ENCODE measurements at regions of chr14 and their contacts with region 1.

Region 1: GRCh38 chr14:67166450-67166853 is 22.8 kb upstream of the GARIN2 start:
- DNase-seq: no peak
- H3K4me3 Mint-ChIP-seq: no peak overlapping the region
- H3K27ac Mint-ChIP-seq: no peak overlapping the region
- H3K4me1 Mint-ChIP-seq: peaks cover 7% of the 10 kb centered on the region
- H3K27me3 Mint-ChIP-seq: no peaks in the 10 kb centered on the region

Region 2: GRCh38 chr14:66910311-66910840 is 256.1 kb before region 1 on chr14:
- intact Hi-C with region 1: no loop called
- DNase-seq: no peak
- H3K4me3 Mint-ChIP-seq: no peak overlapping the region
- H3K27ac Mint-ChIP-seq: no peak overlapping the region
- H3K4me1 Mint-ChIP-seq: no peaks in the 10 kb centered on the region
- H3K27me3 Mint-ChIP-seq: no peaks in the 10 kb centered on the region

Region 3: GRCh38 chr14:67187210-67187609 is 20.8 kb after region 1 on chr14:
- intact Hi-C with region 1: loop called (anchors 2 kb)
- DNase-seq: no peak
- H3K4me3 Mint-ChIP-seq: no peak overlapping the region
- H3K27ac Mint-ChIP-seq: no peak overlapping the region
- H3K4me1 Mint-ChIP-seq: peaks cover 25% of the 10 kb centered on the region
- H3K27me3 Mint-ChIP-seq: no peaks in the 10 kb centered on the region

Region 4: GRCh38 chr14:67240978-67241414 is 74.5 kb after region 1 on chr14:
- intact Hi-C with region 1: loop called (anchors 1 kb)
- DNase-seq: peak; percentile 92
- H3K4me3 Mint-ChIP-seq: peak overlapping the region; percentile 87
- H3K27ac Mint-ChIP-seq: peak overlapping the region; percentile 80
- H3K4me1 Mint-ChIP-seq: peaks cover 18% of the 10 kb centered on the region
- H3K27me3 Mint-ChIP-seq: peaks cover 20% of the 10 kb centered on the region

Region 5: DNA sequence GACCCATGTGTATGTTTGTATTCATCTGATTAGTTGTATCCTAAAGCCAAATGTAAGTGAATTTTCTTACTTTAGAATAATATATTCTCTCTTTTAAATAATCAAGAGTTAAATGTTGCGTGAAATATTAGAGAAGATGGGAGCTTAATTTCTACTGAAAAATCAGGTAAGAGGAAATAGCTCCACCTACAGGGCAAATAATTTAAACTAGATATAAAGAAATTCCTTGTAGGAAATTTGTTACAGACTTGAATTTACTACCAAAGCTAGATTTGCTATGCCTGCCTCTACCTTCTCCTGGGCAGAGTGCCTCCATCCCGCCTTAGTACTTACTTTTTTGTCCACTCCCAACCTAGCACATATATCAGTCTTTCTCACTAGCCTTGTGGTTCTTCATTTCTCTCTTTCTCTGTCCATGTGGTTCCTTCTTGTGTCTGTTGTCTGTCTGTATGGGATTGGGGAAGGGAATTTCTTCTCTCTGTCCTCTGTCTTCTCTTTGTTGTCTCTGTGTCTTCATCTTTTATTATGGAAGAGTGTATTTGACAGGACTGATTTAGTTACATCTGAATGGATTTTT is 119.5 kb after region 1 on chr14:
- intact Hi-C with region 1: loop called (anchors 1 kb)
- DNase-seq: no peak
- H3K4me3 Mint-ChIP-seq: no peak overlapping the region
- H3K27ac Mint-ChIP-seq: no peak overlapping the region
- H3K4me1 Mint-ChIP-seq: no peaks in the 10 kb centered on the region
- H3K27me3 Mint-ChIP-seq: no peaks in the 10 kb centered on the region

Region 6: DNA sequence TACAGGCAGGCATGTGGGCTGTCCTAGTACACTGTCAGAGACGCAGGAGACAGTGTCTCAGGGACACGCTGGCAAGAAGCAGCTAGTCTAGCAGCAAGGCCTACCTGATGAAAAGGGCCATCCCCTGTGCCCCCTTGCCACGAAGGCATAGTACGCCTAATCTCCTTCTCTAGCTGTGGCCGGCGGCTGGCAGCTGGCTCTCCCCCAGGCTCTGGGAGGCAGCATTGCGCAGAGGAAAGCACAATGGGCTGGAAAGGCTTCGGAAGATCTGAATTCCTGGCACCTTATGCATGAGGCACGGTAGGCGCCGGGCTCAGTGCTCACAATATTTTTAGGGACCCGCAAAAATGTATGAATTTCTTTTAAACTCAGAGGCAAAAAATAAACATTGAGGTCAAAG is 350.6 kb after region 1 on chr14:
- intact Hi-C with region 1: no loop called
- DNase-seq: no peak
- H3K4me3 Mint-ChIP-seq: no peak overlapping the region
- H3K27ac Mint-ChIP-seq: no peak overlapping the region
- H3K4me1 Mint-ChIP-seq: peaks cover 9% of the 10 kb centered on the region
- H3K27me3 Mint-ChIP-seq: peaks cover 48% of the 10 kb centered on the region

Measured in activated T-helper 1 cell treated with anti-CD3 and anti-CD28 coated beads, Interleukin-12 subunit alpha, Interleukin-12 subunit beta, Interleukin-2, Interleukin-4 antibody, amounts not matched to agents 30 ng/mL and 10 ng/mL and 1 ng/mL, durations not matched to agents 14 hours and 24 hours and 36 hours (primary cell).